CD14-positive monocyte (primary cell): ENCODE measurements at regions of chr5 and their contacts with region 1.

Region 1: DNA sequence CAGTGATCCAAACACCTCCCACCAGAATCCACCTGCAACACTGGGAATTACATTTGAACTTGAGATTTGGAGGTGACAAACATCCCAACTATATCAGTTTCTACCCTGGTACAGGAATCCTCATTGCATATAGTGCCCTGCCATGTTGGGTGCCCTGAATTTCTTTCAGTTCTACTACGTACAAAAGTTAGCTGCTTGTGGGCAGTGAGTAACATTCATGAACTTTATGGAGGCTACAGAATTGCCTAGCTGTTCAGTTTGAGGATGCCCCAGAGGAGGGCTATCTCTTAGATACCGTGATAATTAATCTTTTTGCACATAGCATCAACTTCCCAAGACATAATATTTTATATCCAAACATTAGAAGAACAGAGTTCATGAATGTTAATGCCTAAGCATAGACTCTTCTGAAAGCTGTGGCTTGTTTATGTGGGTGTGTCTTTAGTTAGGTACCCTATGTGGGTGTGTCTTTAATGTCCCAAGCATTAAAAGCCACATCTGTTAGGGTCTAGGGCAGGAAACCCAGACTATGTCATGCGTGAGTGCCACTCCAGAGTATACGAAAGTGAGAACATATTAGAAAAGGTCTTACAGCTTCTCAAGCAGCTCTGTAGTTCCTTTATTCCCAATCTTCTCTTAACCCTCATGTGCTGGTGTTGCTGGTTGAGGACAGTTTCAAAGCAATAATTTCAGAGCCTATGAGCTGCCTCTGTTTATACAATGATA is 47.0 kb upstream of the CHD1 start:
- DNase-seq: no peak
- H3K4me3 ChIP-seq: no peak overlapping the region
- H3K4me3 Mint-ChIP-seq: no peak overlapping the region
- H3K27ac ChIP-seq: no peak overlapping the region
- H3K27ac Mint-ChIP-seq: no peak overlapping the region
- H3K4me1 ChIP-seq: no peaks in the 10 kb centered on the region
- H3K4me1 Mint-ChIP-seq: peaks cover 10% of the 10 kb centered on the region
- H3K27me3 ChIP-seq: no peaks in the 10 kb centered on the region
- H3K27me3 Mint-ChIP-seq: peaks cover 0 to 1% (median 0%) of the 10 kb centered on the region in 3 donors
- CTCF ChIP-seq: no peak

Region 2: DNA sequence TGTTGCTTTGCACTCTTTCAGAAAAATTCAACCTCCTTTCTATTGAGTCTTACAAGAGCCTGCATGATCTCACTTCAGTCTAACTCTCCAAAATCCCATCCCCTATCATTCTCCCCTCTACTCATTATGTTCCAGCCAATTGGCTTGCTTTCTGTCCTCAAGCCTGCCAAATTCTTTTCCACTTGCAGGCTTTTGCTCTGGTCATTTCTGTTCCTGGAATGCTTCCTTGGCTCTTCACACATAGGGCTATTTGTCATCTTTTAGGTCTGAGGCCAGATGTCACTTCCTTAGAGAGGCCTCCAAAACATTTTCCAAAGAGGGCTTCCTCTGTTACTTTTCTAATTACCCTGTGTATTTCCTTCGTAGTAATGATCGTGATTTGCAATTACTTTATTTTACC is 35.3 kb before region 1 on chr5:
- intact Hi-C with region 1: loop called in 1 of 2 experiments (anchors 5 kb)
- DNase-seq: peak in 1 of 3 donors; percentile 17
- H3K4me3 ChIP-seq: peak overlapping the region in 1 of 3 experiments; percentile 50
- H3K4me3 Mint-ChIP-seq: no peak overlapping the region
- H3K27ac ChIP-seq: peak overlapping the region in 1 of 2 donors; percentile 81
- H3K27ac Mint-ChIP-seq: peak overlapping the region; percentile 90 to 96 (median 94)
- H3K4me1 ChIP-seq: peaks cover 42 to 53% of the 10 kb centered on the region in 2 donors
- H3K4me1 Mint-ChIP-seq: peaks cover 55% of the 10 kb centered on the region
- H3K27me3 ChIP-seq: no peaks in the 10 kb centered on the region
- H3K27me3 Mint-ChIP-seq: peaks cover 0 to 1% (median 0%) of the 10 kb centered on the region in 3 donors
- CTCF ChIP-seq: no peak

Region 3: DNA sequence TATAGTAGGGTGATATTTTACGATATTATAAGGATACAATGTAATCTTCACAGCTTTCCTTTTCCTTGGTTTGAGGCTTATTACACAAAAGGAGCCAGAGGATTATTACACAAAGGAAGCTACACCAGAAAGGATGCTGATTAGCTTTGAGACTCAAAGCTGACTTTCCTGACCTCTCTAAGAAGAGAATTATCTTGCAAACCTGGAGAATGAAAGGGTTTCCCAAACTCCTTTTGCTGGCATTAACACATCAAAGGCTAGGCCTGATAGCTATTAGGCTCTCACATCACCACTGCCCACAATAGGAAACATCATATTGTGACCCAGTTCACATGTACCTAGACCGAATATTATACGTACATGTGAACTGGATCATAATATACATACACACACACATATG is 12.8 kb before region 1 on chr5:
- intact Hi-C with region 1: no loop called
- DNase-seq: no peak
- H3K4me3 ChIP-seq: no peak overlapping the region
- H3K4me3 Mint-ChIP-seq: no peak overlapping the region
- H3K27ac ChIP-seq: no peak overlapping the region
- H3K27ac Mint-ChIP-seq: no peak overlapping the region
- H3K4me1 ChIP-seq: peaks cover 0 to 3% of the 10 kb centered on the region in 2 donors
- H3K4me1 Mint-ChIP-seq: peaks cover 19% of the 10 kb centered on the region
- H3K27me3 ChIP-seq: no peaks in the 10 kb centered on the region
- H3K27me3 Mint-ChIP-seq: no peaks in the 10 kb centered on the region
- CTCF ChIP-seq: no peak

Region 4: DNA sequence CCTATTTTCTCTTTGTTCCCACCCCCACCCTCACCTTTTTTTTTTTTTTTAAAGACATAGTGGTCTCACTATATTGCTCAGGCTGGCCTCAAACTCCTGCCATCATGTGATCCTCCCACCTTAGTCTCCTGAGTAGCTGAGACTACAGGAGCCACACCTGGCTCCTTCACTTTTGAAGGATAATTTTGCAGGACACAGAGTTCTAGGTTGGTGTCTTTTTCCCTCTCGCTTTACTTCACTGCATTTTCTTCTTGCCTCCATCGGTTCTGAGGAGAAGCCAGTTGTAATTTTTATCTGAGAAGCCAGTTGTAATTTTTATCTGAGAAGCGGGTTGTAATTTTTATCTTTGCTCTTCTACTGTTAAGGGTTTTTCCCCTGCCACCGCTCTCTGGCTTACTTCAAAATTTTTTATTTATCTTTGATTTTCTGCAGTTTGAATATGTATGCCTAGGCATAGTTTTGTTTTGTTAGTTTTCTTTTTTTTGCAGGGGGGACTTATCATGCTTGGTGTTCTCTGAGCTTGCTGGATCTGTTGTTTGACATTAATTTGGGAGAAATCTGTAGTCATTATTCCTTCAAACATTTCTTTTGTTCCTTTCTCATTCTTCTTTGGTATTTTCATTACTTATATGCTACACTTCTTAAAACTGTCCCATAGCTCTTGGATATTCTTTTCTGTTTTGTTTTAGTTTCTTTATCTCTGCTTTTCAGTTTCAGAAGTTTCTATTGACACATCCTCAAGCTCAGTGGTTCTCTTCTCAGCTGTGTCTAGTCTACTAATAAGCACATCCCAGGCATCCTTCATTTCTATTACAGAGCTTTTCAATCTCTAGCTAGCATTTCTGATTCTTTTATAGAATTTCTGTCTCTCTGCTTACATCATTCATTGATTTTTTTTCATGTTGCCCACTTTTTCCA is 101.1 kb after region 1 on chr5:
- intact Hi-C with region 1: no loop called
- DNase-seq: no peak
- H3K4me3 ChIP-seq: no peak overlapping the region
- H3K4me3 Mint-ChIP-seq: no peak overlapping the region
- H3K27ac ChIP-seq: no peak overlapping the region
- H3K27ac Mint-ChIP-seq: no peak overlapping the region
- H3K4me1 ChIP-seq: no peaks in the 10 kb centered on the region
- H3K4me1 Mint-ChIP-seq: no peaks in the 10 kb centered on the region
- H3K27me3 ChIP-seq: no peaks in the 10 kb centered on the region
- H3K27me3 Mint-ChIP-seq: peaks cover 0 to 1% (median 0%) of the 10 kb centered on the region in 3 donors
- CTCF ChIP-seq: no peak